ENCODE measurements at regions of chr1 and their contacts with region 1.

Region 1: GRCh38 chr1:35783055-35783583 is 13.3 kb upstream of the CLSPN start:
- DNase-seq: no peak

Region 2: GRCh38 chr1:34889705-34890104 is 893.4 kb before region 1 on chr1:
- intact Hi-C with region 1: loop called in 1 of 2 experiments (anchors 5 kb)
- DNase-seq: no peak

Region 3: GRCh38 chr1:35675773-35676172 is 107.3 kb before region 1 on chr1:
- intact Hi-C with region 1: no loop called
- DNase-seq: no peak

Region 4: DNA sequence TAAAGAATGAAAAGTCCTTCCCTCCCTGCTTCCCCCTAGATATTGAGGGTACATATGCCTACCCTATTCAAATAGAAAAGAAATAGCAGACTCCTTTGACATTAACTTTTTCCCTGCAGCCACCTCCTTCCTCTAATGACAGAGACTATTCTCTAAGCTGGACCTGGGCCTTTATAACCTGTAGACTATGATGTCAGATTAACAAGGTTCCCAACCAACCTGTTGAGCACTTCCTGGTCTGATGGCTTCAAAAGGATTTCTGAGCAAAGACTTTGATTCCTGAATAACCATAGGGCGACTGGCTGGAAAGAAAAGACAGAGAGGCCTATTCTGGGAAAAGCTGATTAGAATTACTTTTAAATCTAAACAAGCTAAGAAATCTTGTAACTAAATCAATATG is 46.0 kb before region 1 on chr1:
- intact Hi-C with region 1: no loop called
- DNase-seq: no peak

Region 5: GRCh38 chr1:35915693-35916092 is 132.6 kb after region 1 on chr1:
- intact Hi-C with region 1: no loop called
- DNase-seq: no peak

Measured in posterior vena cava (tissue), 2 donors.